ENCODE measurements at regions of chr7 and their contacts with region 1.

Region 1: DNA sequence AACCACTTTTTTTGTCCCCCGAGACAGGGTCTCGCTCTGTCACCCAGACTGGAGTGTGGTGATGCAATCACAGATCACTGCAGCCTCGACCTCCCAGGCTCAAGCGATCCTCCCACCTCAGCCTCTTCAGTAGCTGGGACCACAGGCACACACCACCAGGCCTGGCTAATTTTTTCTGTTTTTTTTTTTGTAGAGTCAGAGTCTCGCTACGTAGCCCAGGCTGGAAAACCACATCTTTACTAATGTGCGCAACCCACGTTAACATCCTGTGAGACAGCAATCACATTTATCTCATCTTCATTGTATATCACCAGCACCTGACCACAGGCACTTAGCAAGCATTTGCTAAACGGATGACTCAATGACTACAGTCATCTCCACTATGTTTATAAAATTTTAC is 77.8 kb upstream of the ATP6V0A4 start:
- DNase-seq: peak; percentile 81
- H3K4me3 Mint-ChIP-seq: no peak overlapping the region
- H3K27ac Mint-ChIP-seq: no peak overlapping the region
- H3K4me1 Mint-ChIP-seq: peaks cover 13% of the 10 kb centered on the region
- H3K27me3 Mint-ChIP-seq: no peaks in the 10 kb centered on the region

Region 2: GRCh38 chr7:138713191-138713590 is 162.6 kb before region 1 on chr7:
- CTCF ChIA-PET with region 1: no interaction called
- intact Hi-C with region 1: no loop called
- DNase-seq: no peak
- H3K4me3 Mint-ChIP-seq: no peak overlapping the region
- H3K27ac Mint-ChIP-seq: no peak overlapping the region
- H3K4me1 Mint-ChIP-seq: peaks cover 17% of the 10 kb centered on the region
- H3K27me3 Mint-ChIP-seq: no peaks in the 10 kb centered on the region

Region 3: GRCh38 chr7:138903186-138903820 is 27.5 kb after region 1 on chr7:
- CTCF ChIA-PET with region 1: no interaction called
- intact Hi-C with region 1: loop called (anchors 1 kb)
- DNase-seq: peak; percentile 89
- H3K4me3 Mint-ChIP-seq: peak overlapping the region; percentile 70
- H3K27ac Mint-ChIP-seq: peak overlapping the region; percentile 52
- H3K4me1 Mint-ChIP-seq: peaks cover 41% of the 10 kb centered on the region
- H3K27me3 Mint-ChIP-seq: no peaks in the 10 kb centered on the region

Region 4: GRCh38 chr7:138981332-138982203 is 105.8 kb after region 1 on chr7 and contains the start of gene KIAA1549:
- CTCF ChIA-PET with region 1: no interaction called
- intact Hi-C with region 1: no loop called
- DNase-seq: peak; percentile 59
- H3K4me3 Mint-ChIP-seq: peak within 1 kb of the TSS; percentile 80
- H3K27ac Mint-ChIP-seq: no peak within 1 kb of the TSS
- H3K4me1 Mint-ChIP-seq: peaks cover 8% of the 10 kb centered on the region
- H3K27me3 Mint-ChIP-seq: peaks cover 36% of the 10 kb centered on the region
- total RNA-seq, gene KIAA1549: 0.60 to 0.67 TPM

Measured in activated naive CD4-positive, alpha-beta T cell treated with anti-CD3 and anti-CD28 coated beads for 36 hours (primary cell).